Endothelial cell of umbilical vein (primary cell): ENCODE measurements at regions of chr3 and their contacts with region 1.

Region 1: GRCh38 chr3:128607710-128608048 is 42.9 kb downstream of the RPN1 start:
- DNase-seq: no peak
- H3K4me3 ChIP-seq: peak overlapping the region in 2 of 3 experiments; percentile 48 to 53
- H3K27ac ChIP-seq: no peak overlapping the region
- H3K4me1 ChIP-seq: peaks cover 5% of the 10 kb centered on the region
- H3K27me3 ChIP-seq: no peaks in the 10 kb centered on the region
- CTCF ChIP-seq: no peak
- POLR2A ChIP-seq: no peak

Region 2: GRCh38 chr3:126715392-126715791 is 1892.3 kb before region 1 on chr3:
- CTCF ChIA-PET with region 1: no interaction called
- POLR2A ChIA-PET with region 1: no interaction called
- dilution Hi-C with region 1: no loop called
- intact Hi-C with region 1: no loop called
- DNase-seq: no peak
- H3K4me3 ChIP-seq: no peak overlapping the region
- H3K27ac ChIP-seq: no peak overlapping the region
- H3K4me1 ChIP-seq: no peaks in the 10 kb centered on the region
- H3K27me3 ChIP-seq: no peaks in the 10 kb centered on the region
- CTCF ChIP-seq: no peak
- POLR2A ChIP-seq: no peak

Region 3: DNA sequence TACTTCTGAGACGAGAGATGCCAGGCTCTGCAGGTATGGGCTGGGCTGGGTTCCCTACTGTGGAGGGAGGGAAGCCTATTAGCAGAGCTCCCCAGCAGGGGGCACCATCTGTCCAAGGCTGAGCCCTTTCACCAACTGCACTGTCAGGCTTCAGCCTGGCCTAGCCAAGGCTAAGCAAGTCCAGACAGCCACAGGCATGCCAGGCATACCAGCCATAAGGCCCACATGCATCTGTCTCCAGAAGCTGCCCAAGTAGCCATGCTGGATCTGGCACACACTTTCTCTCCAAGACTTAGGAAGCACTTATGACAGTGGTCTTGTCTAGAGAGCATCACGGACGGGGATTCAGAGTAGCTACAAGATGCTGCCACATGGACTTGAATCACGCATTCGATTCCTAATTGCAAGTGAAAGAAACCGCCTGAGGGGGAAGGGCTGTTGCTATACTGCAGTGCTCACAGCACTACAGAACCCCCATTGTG is 512.4 kb before region 1 on chr3:
- CTCF ChIA-PET with region 1: interaction called, 27 read pairs
- POLR2A ChIA-PET with region 1: no interaction called
- dilution Hi-C with region 1: no loop called
- intact Hi-C with region 1: loop called (anchors 1 kb)
- DNase-seq: peak; percentile 83
- H3K4me3 ChIP-seq: no peak overlapping the region
- H3K27ac ChIP-seq: peak overlapping the region; percentile 30
- H3K4me1 ChIP-seq: peaks cover 15% of the 10 kb centered on the region
- H3K27me3 ChIP-seq: no peaks in the 10 kb centered on the region
- CTCF ChIP-seq: peak; percentile 89 to 92
- POLR2A ChIP-seq: no peak

Region 4: GRCh38 chr3:128176276-128176831 is 431.3 kb before region 1 on chr3:
- CTCF ChIA-PET with region 1: interaction called, 11 read pairs
- POLR2A ChIA-PET with region 1: no interaction called
- dilution Hi-C with region 1: no loop called
- intact Hi-C with region 1: loop called (anchors 1 kb)
- DNase-seq: no peak
- H3K4me3 ChIP-seq: no peak overlapping the region
- H3K27ac ChIP-seq: no peak overlapping the region
- H3K4me1 ChIP-seq: no peaks in the 10 kb centered on the region
- H3K27me3 ChIP-seq: no peaks in the 10 kb centered on the region
- CTCF ChIP-seq: no peak
- POLR2A ChIP-seq: no peak

Region 5: DNA sequence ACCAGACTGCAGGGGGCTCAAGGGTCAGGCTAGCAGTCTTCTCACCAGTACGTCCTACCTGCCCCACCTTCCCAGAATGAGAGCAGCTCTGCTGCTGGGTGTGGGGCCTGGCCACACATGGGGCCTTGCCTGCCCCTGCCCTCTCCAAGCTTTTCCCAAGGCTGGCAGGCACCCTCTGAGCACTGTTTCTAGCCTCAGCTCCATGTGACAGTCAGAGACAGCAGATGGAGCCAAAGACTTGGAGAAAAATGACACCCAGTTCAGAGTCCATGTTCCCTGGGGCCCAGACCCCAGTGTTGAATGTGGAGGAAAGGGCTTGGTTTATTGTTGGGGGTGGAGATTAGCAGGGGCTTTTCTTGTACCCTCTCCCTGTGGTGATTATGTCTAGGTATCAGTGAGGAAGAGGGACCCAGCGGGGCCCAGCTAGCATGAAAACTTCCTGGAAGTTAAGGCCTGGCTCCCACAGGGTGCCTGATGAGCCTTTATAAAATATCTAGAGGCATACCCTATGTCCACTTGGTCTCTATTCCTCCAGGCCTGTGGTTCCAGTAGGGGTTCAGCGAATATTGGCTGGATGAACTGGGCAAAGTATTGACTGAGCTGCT is 300.5 kb before region 1 on chr3:
- CTCF ChIA-PET with region 1: interaction called, 24 read pairs
- POLR2A ChIA-PET with region 1: no interaction called
- dilution Hi-C with region 1: no loop called
- intact Hi-C with region 1: no loop called
- DNase-seq: peak; percentile 16
- H3K4me3 ChIP-seq: no peak overlapping the region
- H3K27ac ChIP-seq: no peak overlapping the region
- H3K4me1 ChIP-seq: no peaks in the 10 kb centered on the region
- H3K27me3 ChIP-seq: no peaks in the 10 kb centered on the region
- CTCF ChIP-seq: peak in 1 of 2 donors; percentile 10
- POLR2A ChIP-seq: no peak

Region 6: DNA sequence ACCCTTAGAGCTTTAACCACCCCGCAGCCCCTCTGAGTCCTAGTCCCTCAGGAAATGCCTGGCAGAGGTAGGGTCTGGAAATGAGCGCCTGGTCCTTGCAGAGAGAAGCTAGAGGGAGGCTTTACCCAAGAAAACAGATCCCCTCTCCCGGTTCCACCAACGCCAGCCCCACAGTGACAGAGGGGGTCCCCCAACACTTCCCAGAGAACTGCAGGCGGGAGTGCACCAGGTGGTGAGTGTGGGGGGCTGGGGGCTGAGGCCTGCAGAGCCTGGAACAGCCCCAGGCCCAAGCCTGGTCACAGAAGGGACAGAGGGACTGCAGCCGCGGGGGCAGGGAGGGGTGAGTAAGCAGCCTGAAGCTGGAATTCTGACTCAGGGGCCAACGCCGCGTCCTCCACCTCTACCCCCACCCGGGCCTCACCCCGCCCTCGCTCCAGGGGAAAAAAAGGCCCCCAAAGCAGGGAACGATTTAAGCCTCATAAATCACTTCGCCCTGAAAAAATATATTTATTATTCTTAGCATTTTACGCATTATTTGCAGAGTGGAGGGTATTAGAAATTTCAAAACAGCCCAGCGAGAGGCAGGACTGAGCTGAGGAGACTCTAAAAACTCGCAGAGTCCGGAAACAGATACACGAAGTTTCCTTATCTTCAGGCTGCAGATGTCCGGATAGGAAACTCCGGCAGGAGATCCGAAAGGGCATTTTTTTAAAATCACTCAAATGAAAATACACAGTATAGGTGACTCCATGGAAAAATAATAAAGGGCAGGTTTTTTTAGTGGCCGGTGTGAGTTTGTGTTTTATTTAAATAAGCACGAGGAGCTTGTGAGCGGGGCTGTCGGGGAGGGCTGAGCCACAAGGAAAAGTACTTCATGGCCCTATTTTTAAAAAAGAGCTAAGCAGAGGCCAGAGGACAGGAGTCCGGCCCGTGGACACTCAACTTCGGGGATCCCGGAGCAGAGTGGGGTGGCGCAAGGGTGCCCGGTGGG is 124.7 kb before region 1 on chr3:
- CTCF ChIA-PET with region 1: interaction called, 15 read pairs
- POLR2A ChIA-PET with region 1: no interaction called
- dilution Hi-C with region 1: no loop called
- intact Hi-C with region 1: no loop called
- DNase-seq: peak; percentile 99
- H3K4me3 ChIP-seq: peak overlapping the region in 2 of 3 experiments; percentile 77 to 95
- H3K27ac ChIP-seq: peak overlapping the region; percentile 97
- H3K4me1 ChIP-seq: peaks cover 52% of the 10 kb centered on the region
- H3K27me3 ChIP-seq: no peaks in the 10 kb centered on the region
- CTCF ChIP-seq: peak in 1 of 2 donors; percentile 8
- POLR2A ChIP-seq: peak; percentile 89

Region 7: DNA sequence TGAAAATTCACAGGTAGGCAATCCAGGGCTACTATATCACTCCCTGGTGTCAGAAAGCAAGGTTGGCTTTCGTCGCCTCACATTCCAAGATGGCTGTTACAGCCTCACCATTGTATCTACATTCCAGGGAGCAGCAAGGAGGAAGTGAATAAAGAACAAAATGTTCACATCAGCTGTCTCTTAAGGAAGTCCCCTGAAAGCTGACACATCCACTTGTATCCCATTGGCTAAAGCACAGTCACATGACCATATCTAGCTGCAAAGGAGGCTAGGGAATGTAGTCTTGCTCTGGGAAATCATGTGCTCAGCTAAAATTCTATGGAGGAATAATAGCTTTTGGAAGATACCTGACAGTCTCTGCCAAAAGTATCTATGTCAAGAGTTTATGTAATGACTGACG is 101.9 kb before region 1 on chr3:
- CTCF ChIA-PET with region 1: no interaction called
- POLR2A ChIA-PET with region 1: no interaction called
- dilution Hi-C with region 1: no loop called
- intact Hi-C with region 1: no loop called
- DNase-seq: no peak
- H3K4me3 ChIP-seq: no peak overlapping the region
- H3K27ac ChIP-seq: no peak overlapping the region
- H3K4me1 ChIP-seq: no peaks in the 10 kb centered on the region
- H3K27me3 ChIP-seq: peaks cover 0 to 6% of the 10 kb centered on the region in 2 experiments
- CTCF ChIP-seq: no peak
- POLR2A ChIP-seq: no peak

Region 8: DNA sequence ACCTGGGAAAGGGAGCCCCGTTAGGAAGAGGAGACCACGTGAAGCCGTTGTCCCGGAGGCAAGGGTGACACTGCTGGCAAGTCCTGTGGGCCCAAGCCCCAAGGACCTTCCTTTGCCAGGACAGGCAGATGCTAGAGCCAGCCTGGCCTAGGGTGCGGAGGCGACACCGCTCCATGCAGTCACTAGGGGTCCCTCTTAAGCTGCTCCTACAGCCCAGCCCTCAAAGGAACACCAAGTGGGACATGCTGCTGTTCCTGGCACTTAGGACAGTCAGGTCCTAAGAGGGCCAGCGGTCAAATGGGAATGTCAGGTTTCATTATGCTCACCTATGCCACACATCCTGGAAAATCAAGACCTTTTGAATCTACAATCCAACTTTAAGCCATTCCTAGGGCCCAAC is 16.7 kb before region 1 on chr3:
- CTCF ChIA-PET with region 1: interaction called, 15 read pairs
- POLR2A ChIA-PET with region 1: no interaction called
- dilution Hi-C with region 1: no loop called
- intact Hi-C with region 1: no loop called
- DNase-seq: no peak
- H3K4me3 ChIP-seq: no peak overlapping the region
- H3K27ac ChIP-seq: no peak overlapping the region
- H3K4me1 ChIP-seq: peaks cover 3% of the 10 kb centered on the region
- H3K27me3 ChIP-seq: peaks cover 0 to 4% of the 10 kb centered on the region in 2 experiments
- CTCF ChIP-seq: peak in 1 of 2 donors; percentile 39
- POLR2A ChIP-seq: no peak